Right ventricle myocardium inferior (tissue), 1 donor: ENCODE measurements at regions of chr11 and their contacts with region 1.

Region 1: DNA sequence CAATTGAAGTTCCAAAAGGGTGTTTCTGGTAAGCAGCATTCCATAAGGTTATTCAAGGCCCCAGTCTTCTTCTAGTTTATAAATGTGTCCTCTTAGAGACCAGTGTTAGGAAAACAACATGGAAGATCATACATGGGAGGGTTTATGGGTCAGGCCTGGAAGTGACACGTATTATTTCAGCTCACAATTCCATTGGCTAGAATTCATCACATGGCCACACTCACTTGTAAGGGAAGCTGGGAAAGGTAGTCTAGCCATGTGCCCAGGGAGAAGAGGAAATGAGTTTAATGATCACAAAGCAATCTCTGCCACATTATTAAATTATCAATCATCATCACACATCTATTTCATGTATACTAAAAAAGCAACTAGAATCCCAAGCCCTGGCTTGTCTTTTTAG is 181.7 kb upstream of the TBCEL start:
- DNase-seq: no peak
- ATAC-seq: no peak

Region 2: GRCh38 chr11:120900643-120901042 is 58.4 kb after region 1 on chr11:
- intact Hi-C with region 1: loop called (anchors 2 kb)
- DNase-seq: no peak
- ATAC-seq: no peak